MCF 10A (cell line): ENCODE measurements at regions of chr1 and their contacts with region 1.

Region 1: GRCh38 chr1:179002552-179003345 is 22.9 kb upstream of the FAM20B start:
- DNase-seq: peak; percentile 80
- H3K4me3 Mint-ChIP-seq: no peak overlapping the region
- H3K27ac Mint-ChIP-seq: peak overlapping the region; percentile 1
- H3K4me1 Mint-ChIP-seq: peaks cover 4% of the 10 kb centered on the region
- H3K27me3 Mint-ChIP-seq: no peaks in the 10 kb centered on the region
- CTCF ChIP-seq: peak; percentile 100

Region 2: GRCh38 chr1:178310685-178311105 is 692.1 kb before region 1 on chr1:
- CTCF ChIA-PET with region 1: interaction called, 28 read pairs
- POLR2A ChIA-PET with region 1: interaction called, 4 read pairs
- intact Hi-C with region 1: loop called (anchors 2 kb)
- DNase-seq: peak; percentile 84
- H3K4me3 Mint-ChIP-seq: no peak overlapping the region
- H3K27ac Mint-ChIP-seq: peak overlapping the region; percentile 77
- H3K4me1 Mint-ChIP-seq: peaks cover 15% of the 10 kb centered on the region
- H3K27me3 Mint-ChIP-seq: no peaks in the 10 kb centered on the region
- CTCF ChIP-seq: peak; percentile 82

Region 3: DNA sequence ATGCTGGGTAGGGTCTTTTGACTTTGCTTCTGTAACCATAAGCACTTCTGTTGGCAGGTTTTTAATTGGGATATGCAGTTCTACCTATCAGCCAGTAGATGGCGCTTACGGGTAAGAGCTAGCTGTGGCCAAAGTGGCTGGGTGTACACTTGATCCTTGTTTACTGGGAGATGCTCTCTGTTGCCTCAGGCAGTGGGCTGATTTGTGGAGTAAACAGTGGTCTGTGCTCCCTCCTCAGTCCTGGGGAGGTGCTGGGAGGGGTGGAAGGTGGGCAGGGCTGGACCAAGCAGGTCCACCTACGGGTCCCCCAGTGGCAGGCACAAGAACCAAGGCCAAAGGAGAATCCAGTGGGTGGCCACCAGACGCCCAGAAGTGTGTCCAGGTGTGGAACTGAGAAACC is 234.3 kb before region 1 on chr1:
- CTCF ChIA-PET with region 1: interaction called, 220 read pairs
- POLR2A ChIA-PET with region 1: no interaction called
- intact Hi-C with region 1: no loop called
- DNase-seq: peak; percentile 36
- H3K4me3 Mint-ChIP-seq: no peak overlapping the region
- H3K27ac Mint-ChIP-seq: no peak overlapping the region
- H3K4me1 Mint-ChIP-seq: no peaks in the 10 kb centered on the region
- H3K27me3 Mint-ChIP-seq: no peaks in the 10 kb centered on the region
- CTCF ChIP-seq: peak; percentile 64

Region 4: DNA sequence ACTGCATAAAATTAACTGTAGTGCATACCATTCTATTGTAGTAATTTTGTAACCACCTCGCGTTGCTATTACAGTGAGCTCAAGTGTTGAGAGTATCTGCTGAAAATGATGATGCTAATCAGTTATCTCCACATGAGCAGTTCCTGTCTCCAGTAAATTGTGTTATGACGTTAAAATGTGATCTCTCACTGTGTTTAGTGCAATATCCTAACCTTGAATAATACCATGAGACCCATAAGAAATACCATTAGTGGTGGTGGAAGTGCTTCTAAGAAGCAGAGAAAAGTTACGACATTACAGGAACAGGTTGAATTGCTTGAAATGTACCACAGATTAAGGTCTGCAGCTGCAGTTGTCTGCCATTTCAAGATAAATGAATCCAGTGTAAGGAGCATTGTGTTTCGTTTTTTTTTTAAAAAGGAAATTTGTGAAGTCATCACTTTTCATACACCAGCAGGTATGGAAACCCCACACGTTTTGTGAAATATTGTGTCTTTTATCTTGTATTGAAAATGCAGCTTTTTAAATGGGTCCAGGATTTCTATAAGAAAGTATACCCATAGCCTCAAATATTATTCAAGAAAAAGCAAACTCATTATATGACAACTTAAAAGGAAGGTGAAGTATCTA is 204.4 kb before region 1 on chr1:
- CTCF ChIA-PET with region 1: interaction called, 12 read pairs
- POLR2A ChIA-PET with region 1: no interaction called
- intact Hi-C with region 1: no loop called
- DNase-seq: no peak
- H3K4me3 Mint-ChIP-seq: no peak overlapping the region
- H3K27ac Mint-ChIP-seq: no peak overlapping the region
- H3K4me1 Mint-ChIP-seq: peaks cover 11% of the 10 kb centered on the region
- H3K27me3 Mint-ChIP-seq: no peaks in the 10 kb centered on the region
- CTCF ChIP-seq: no peak

Region 5: DNA sequence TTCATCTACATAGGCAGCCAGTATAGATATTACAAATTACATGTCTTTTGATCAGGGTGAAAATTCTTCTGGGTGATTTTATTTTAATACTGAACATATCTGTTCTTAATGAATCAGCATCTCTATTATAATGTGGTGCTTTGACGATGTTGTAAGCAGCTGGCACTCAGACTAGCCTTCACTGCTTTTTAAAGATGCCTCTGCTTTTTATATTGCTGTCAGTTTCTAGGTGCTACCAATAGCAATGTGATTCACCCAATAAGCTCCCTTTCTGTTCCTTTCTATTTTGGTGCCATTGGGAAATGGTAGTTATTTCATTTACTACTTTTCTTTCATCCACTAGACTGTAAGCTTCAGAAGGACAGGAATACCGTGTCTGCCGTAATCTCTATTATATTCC is 120.8 kb before region 1 on chr1:
- CTCF ChIA-PET with region 1: interaction called, 19 read pairs
- POLR2A ChIA-PET with region 1: no interaction called
- intact Hi-C with region 1: no loop called
- DNase-seq: no peak
- H3K4me3 Mint-ChIP-seq: no peak overlapping the region
- H3K27ac Mint-ChIP-seq: no peak overlapping the region
- H3K4me1 Mint-ChIP-seq: peaks cover 10% of the 10 kb centered on the region
- H3K27me3 Mint-ChIP-seq: no peaks in the 10 kb centered on the region
- CTCF ChIP-seq: no peak

Region 6: DNA sequence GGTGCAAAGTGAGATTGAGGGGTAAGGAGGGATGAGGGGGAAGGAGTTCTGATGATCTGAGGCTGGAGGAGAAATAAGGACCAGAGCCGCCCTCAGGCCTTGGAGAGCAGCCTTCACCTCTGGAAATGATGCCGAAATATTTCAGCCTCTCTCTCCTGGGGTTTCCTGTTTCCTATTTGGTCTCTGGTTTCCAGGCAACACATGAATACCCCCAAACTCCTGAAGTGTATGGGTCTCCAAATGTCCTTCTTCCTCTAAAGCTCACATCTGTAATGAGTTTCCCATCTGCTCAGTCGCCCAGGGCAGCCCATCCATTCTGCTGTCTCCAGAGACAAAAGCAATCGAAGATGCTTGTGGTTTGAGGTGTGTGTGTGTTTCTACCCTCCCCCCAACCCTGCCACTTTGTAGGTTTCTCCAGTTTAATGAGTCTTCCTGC is 29.1 kb before region 1 on chr1:
- CTCF ChIA-PET with region 1: interaction called, 19 read pairs
- POLR2A ChIA-PET with region 1: no interaction called
- intact Hi-C with region 1: no loop called
- DNase-seq: no peak
- H3K4me3 Mint-ChIP-seq: no peak overlapping the region
- H3K27ac Mint-ChIP-seq: no peak overlapping the region
- H3K4me1 Mint-ChIP-seq: no peaks in the 10 kb centered on the region
- H3K27me3 Mint-ChIP-seq: no peaks in the 10 kb centered on the region
- CTCF ChIP-seq: no peak

Region 7: GRCh38 chr1:179036844-179037465 is 34.2 kb after region 1 on chr1:
- CTCF ChIA-PET with region 1: interaction called, 17 read pairs
- POLR2A ChIA-PET with region 1: no interaction called
- intact Hi-C with region 1: no loop called
- DNase-seq: no peak
- H3K4me3 Mint-ChIP-seq: no peak overlapping the region
- H3K27ac Mint-ChIP-seq: no peak overlapping the region
- H3K4me1 Mint-ChIP-seq: peaks cover 45% of the 10 kb centered on the region
- H3K27me3 Mint-ChIP-seq: no peaks in the 10 kb centered on the region
- CTCF ChIP-seq: no peak